Left colon (tissue), 2 donors: ENCODE measurements at regions of chr4 and their contacts with region 1.

Region 1: GRCh38 chr4:127965062-127965802 is at the starts of genes ABHD18 and MFSD8:
- DNase-seq: peak; percentile 100
- ATAC-seq: peak; percentile 95
- total RNA-seq, gene ABHD18: 16.9 to 17.5 TPM
- total RNA-seq, gene MFSD8: 23.1 to 28.4 TPM

Region 2: GRCh38 chr4:128060699-128061565 is 95.7 kb after region 1 on chr4 and contains the start of gene LARP1B:
- intact Hi-C with region 1: loop called in 1 of 2 experiments (anchors 10 kb)
- DNase-seq: peak; percentile 97
- ATAC-seq: peak; percentile 88
- total RNA-seq, gene LARP1B: 30.1 to 33.8 TPM